GM12878 (cell line): ENCODE measurements at regions of chr12 and their contacts with region 1.

Region 1: DNA sequence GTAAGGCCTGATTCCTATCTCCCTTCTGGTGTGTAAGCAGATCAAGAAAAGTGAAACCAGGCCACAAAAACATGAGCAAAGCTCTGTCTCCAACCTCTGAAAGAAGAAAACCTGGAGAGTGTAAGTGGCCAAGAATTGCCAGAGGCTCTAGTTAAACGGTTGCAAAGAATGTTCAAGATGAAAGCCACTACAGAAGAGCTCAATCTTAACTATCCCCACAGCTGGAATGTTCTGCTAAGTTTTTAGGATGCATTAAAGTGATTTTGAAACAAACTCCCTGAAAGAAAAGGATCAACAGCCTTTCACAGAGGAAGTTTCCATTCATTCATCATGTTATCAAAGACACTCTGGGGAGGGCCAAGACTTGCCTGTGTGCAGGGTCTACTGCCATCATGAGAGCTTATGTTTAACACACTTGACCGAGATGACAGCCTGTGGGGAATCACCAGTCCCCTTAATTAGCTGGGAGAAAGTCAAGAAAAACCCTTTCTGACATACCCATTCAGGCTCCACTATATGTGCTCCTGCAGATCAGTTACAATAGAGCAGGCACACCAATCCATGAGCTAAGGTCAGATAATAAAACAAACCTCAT is 128.0 kb upstream of the OVCH1 start:
- DNase-seq: peak; percentile 16
- ATAC-seq: peak; percentile 83
- H3K4me3 ChIP-seq: no peak overlapping the region
- H3K27ac ChIP-seq: no peak overlapping the region
- H3K4me1 ChIP-seq: no peaks in the 10 kb centered on the region
- H3K27me3 ChIP-seq: no peaks in the 10 kb centered on the region
- CTCF ChIP-seq: no peak
- EP300 ChIP-seq: no peak
- POLR2A ChIP-seq: no peak
- RAD21 ChIP-seq: no peak

Region 2: DNA sequence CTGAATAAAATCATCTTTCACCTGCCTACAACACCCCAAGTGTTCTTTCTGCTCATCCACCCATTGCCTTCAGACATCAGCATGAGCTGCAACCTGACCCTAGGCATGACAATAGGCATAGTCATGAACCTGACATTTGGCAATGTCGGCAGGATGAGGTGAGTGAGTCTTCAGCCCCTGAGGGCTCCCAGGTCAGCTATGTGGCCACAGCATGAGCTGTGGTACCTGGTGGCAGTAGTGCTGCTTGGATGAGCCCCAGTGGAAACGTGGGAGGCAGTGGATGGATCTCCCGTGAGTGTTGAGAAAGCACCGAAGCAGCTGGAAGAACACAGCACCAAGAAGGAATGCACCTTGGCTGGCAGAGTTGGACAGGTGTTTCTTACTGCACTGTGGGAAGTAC is 811.2 kb before region 1 on chr12:
- CTCF ChIA-PET with region 1: no interaction called
- POLR2A ChIA-PET with region 1: no interaction called
- RAD21 ChIA-PET with region 1: no interaction called
- SMC1A ChIA-PET with region 1: no interaction called
- in situ Hi-C with region 1: no loop called
- intact Hi-C with region 1: no loop called
- DNase-seq: no peak
- ATAC-seq: no peak
- H3K4me3 ChIP-seq: no peak overlapping the region
- H3K27ac ChIP-seq: no peak overlapping the region
- H3K4me1 ChIP-seq: no peaks in the 10 kb centered on the region
- H3K27me3 ChIP-seq: no peaks in the 10 kb centered on the region
- CTCF ChIP-seq: no peak
- EP300 ChIP-seq: no peak
- POLR2A ChIP-seq: no peak
- RAD21 ChIP-seq: no peak

Region 3: DNA sequence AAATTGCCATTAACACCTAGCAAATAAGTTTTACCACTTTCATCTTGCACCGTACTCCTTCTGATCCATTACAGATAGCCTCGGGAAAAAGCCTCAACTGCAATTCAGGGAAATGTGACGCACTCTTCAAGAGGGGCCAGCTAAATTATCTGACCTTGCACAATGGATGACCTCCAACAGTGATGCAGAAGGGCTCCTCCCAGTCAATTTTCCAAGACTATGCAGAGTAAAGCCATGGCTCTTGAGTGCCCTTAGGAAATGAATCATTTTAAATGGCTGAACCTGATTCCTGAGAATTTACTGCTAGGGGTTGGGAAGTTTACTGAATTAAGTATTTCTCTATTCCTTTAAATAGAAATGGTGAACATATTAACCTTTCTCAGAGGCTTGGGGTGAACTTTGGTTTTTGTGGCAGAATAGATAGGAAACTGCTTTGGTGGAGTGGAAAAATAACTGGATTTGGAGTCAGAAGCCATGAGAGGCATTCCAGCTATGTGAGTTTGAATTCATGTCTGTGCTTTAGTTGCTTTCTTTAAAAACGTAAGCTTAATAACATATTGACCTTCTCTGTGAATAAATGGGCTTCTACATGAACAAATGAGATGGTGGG is 63.2 kb before region 1 on chr12:
- CTCF ChIA-PET with region 1: interaction called, 7 read pairs
- POLR2A ChIA-PET with region 1: no interaction called
- RAD21 ChIA-PET with region 1: interaction called, 17 read pairs
- SMC1A ChIA-PET with region 1: interaction called, 7 read pairs
- in situ Hi-C with region 1: no loop called
- intact Hi-C with region 1: no loop called
- DNase-seq: no peak
- ATAC-seq: no peak
- H3K4me3 ChIP-seq: no peak overlapping the region
- H3K27ac ChIP-seq: no peak overlapping the region
- H3K4me1 ChIP-seq: no peaks in the 10 kb centered on the region
- H3K27me3 ChIP-seq: no peaks in the 10 kb centered on the region
- CTCF ChIP-seq: no peak
- EP300 ChIP-seq: no peak
- POLR2A ChIP-seq: no peak
- RAD21 ChIP-seq: no peak

Region 4: DNA sequence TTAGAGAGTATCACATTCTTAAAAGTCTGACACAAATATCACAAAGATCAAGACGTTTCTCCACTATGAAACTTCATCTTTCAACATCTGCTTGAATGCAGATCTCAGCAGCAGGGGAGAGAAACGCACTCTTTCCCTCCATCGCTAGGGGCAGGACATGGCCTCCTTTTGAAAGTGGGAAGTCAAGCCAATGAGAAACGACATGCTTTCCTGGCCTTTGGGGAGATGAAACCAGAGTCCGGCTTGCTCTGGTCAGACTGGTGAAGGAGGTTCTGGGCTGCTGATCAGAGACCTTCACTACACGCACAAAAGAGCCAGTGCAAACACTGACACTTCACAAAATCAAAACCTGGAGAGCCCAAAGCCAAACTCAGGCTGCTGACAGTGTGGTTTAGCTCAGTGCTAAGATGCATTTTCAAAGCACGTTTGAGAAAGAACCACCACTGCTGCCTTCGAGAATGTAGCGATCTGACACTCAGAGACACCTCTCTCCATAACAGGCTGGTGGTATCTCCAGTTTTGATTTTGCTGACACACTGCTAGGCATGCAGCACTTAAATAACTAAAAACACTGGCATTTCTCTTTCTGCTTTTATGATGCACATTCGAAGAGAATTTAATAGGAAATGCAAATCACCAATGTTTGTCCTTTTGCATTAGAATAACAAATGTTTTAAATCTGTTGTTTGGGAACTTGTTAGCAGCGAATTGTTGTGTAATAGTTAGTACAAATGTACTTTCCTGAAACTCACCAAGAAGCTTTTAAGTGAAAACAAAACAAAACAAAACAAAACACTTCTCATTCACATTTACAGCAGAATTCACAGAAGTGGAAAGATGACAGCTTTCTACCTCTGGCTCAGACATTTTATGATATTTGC is 34.1 kb before region 1 on chr12:
- CTCF ChIA-PET with region 1: no interaction called
- POLR2A ChIA-PET with region 1: no interaction called
- RAD21 ChIA-PET with region 1: interaction called, 5 read pairs
- SMC1A ChIA-PET with region 1: interaction called, 11 read pairs
- in situ Hi-C with region 1: no loop called
- intact Hi-C with region 1: no loop called
- DNase-seq: no peak
- ATAC-seq: peak; percentile 87
- H3K4me3 ChIP-seq: no peak overlapping the region
- H3K27ac ChIP-seq: no peak overlapping the region
- H3K4me1 ChIP-seq: no peaks in the 10 kb centered on the region
- H3K27me3 ChIP-seq: no peaks in the 10 kb centered on the region
- CTCF ChIP-seq: peak in 2 of 3 experiments; percentile 23 to 39; a peak in 2 of 6 replicates
- EP300 ChIP-seq: no peak
- POLR2A ChIP-seq: no peak
- RAD21 ChIP-seq: no peak

Region 5: GRCh38 chr12:29640589-29641345 is 15.3 kb after region 1 on chr12:
- CTCF ChIA-PET with region 1: interaction called, 4 read pairs
- POLR2A ChIA-PET with region 1: interaction called, 3 read pairs
- RAD21 ChIA-PET with region 1: interaction called, 3 read pairs
- SMC1A ChIA-PET with region 1: interaction called, 12 read pairs
- in situ Hi-C with region 1: no loop called
- intact Hi-C with region 1: no loop called
- DNase-seq: no peak
- ATAC-seq: no peak
- H3K4me3 ChIP-seq: no peak overlapping the region
- H3K27ac ChIP-seq: no peak overlapping the region
- H3K4me1 ChIP-seq: no peaks in the 10 kb centered on the region
- H3K27me3 ChIP-seq: no peaks in the 10 kb centered on the region
- CTCF ChIP-seq: no peak
- EP300 ChIP-seq: no peak
- POLR2A ChIP-seq: no peak
- RAD21 ChIP-seq: no peak

Region 6: GRCh38 chr12:29673346-29673745 is 47.9 kb after region 1 on chr12:
- CTCF ChIA-PET with region 1: interaction called, 3 read pairs
- POLR2A ChIA-PET with region 1: interaction called, 3 read pairs
- RAD21 ChIA-PET with region 1: interaction called, 4 read pairs
- SMC1A ChIA-PET with region 1: interaction called, 17 read pairs
- in situ Hi-C with region 1: no loop called
- intact Hi-C with region 1: no loop called
- DNase-seq: no peak
- ATAC-seq: no peak
- H3K4me3 ChIP-seq: no peak overlapping the region
- H3K27ac ChIP-seq: no peak overlapping the region
- H3K4me1 ChIP-seq: no peaks in the 10 kb centered on the region
- H3K27me3 ChIP-seq: no peaks in the 10 kb centered on the region
- CTCF ChIP-seq: no peak
- EP300 ChIP-seq: no peak
- POLR2A ChIP-seq: no peak
- RAD21 ChIP-seq: no peak

Region 7: DNA sequence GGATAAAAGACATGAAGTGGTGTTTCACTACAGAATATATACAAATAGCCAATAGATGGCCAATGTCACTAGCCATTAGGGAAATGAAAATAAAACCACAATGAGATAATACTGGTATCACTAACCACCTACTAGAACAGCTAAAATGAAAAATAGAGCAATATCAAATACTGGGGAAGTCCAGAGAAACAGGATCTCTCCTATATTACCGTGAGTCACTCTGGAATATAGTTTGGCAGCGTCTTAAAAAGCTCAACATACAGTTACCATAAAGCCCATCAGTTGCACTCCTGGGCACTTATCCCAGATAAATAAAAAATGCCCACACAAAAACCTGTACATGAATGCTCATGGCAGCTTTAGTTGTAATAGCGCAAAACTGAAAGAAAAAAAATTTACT is 56.6 kb after region 1 on chr12:
- CTCF ChIA-PET with region 1: no interaction called
- POLR2A ChIA-PET with region 1: no interaction called
- RAD21 ChIA-PET with region 1: interaction called, 11 read pairs
- SMC1A ChIA-PET with region 1: interaction called, 9 read pairs
- in situ Hi-C with region 1: no loop called
- intact Hi-C with region 1: no loop called
- DNase-seq: no peak
- ATAC-seq: peak; percentile 84
- H3K4me3 ChIP-seq: no peak overlapping the region
- H3K27ac ChIP-seq: no peak overlapping the region
- H3K4me1 ChIP-seq: no peaks in the 10 kb centered on the region
- H3K27me3 ChIP-seq: no peaks in the 10 kb centered on the region
- CTCF ChIP-seq: no peak
- EP300 ChIP-seq: peak in 1 of 2 experiments; percentile 67; a peak in 1 of 4 replicates
- POLR2A ChIP-seq: no peak
- RAD21 ChIP-seq: no peak

Region 8: GRCh38 chr12:29691141-29691854 is 65.8 kb after region 1 on chr12:
- CTCF ChIA-PET with region 1: interaction called, 4 read pairs
- POLR2A ChIA-PET with region 1: no interaction called
- RAD21 ChIA-PET with region 1: interaction called, 12 read pairs
- SMC1A ChIA-PET with region 1: interaction called, 4 read pairs
- in situ Hi-C with region 1: no loop called
- intact Hi-C with region 1: no loop called
- DNase-seq: peak; percentile 52
- ATAC-seq: peak; percentile 86
- H3K4me3 ChIP-seq: no peak overlapping the region
- H3K27ac ChIP-seq: no peak overlapping the region
- H3K4me1 ChIP-seq: no peaks in the 10 kb centered on the region
- H3K27me3 ChIP-seq: no peaks in the 10 kb centered on the region
- CTCF ChIP-seq: no peak
- EP300 ChIP-seq: peak in 1 of 2 experiments; percentile 18; a peak in 1 of 4 replicates
- POLR2A ChIP-seq: no peak
- RAD21 ChIP-seq: no peak